Esophagus squamous epithelium (tissue), 5 donors: ENCODE measurements at regions of chr3 and their contacts with region 1.

Region 1: DNA sequence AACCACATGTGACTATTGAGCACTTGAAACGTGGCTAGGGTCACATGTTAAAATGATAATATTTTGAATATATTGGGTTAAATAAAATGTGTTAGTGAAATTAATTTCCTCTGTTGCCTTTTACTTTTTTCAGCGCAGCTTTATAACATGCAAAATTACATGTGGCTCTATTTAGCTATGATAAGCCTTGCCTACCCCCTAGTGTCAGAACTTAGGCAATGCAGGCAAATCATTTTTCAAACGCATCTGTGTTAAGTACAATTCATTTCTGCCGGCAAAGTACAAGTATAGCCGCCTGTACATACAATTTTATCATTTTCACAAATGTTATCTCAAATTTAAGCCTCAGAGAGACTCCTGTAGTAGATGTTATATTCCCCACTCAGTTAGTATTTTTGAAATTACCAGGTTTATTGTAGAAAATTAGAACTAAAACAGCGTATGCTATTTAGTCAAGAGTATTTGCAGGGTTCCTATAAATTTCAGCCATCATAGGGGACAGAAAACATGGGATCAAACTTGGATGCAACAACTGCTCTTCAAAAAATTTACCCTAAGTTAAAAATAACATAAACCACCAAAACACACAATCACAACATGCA is 56.1 kb downstream of the TAFA4 start:
- DNase-seq: no peak
- H3K4me3 ChIP-seq: no peak overlapping the region
- H3K27ac ChIP-seq: no peak overlapping the region
- H3K4me1 ChIP-seq: no peaks in the 10 kb centered on the region
- H3K27me3 ChIP-seq: peaks cover 0 to 5% (median 0%) of the 10 kb centered on the region in 4 donors
- CTCF ChIP-seq: peak; percentile 42 to 84 (median 74)
- POLR2A ChIP-seq: no peak

Region 2: GRCh38 chr3:66971891-66972551 is 1904.2 kb before region 1 on chr3:
- intact Hi-C with region 1: loop called (anchors 10 kb)
- DNase-seq: peak; percentile 20
- H3K4me3 ChIP-seq: peak overlapping the region in 3 of 4 donors; percentile 24 to 55 (median 35)
- H3K27ac ChIP-seq: peak overlapping the region in 1 of 4 donors; percentile 1
- H3K4me1 ChIP-seq: peaks cover 5 to 11% (median 5%) of the 10 kb centered on the region in 3 donors
- H3K27me3 ChIP-seq: no peaks in the 10 kb centered on the region
- CTCF ChIP-seq: peak in 5 of 6 experiments; percentile 58 to 77 (median 68)
- POLR2A ChIP-seq: no peak

Region 3: GRCh38 chr3:69144631-69145245 is 268.5 kb after region 1 on chr3:
- intact Hi-C with region 1: no loop called
- DNase-seq: no peak
- H3K4me3 ChIP-seq: no peak overlapping the region
- H3K27ac ChIP-seq: no peak overlapping the region
- H3K4me1 ChIP-seq: no peaks in the 10 kb centered on the region
- H3K27me3 ChIP-seq: no peaks in the 10 kb centered on the region
- CTCF ChIP-seq: no peak
- POLR2A ChIP-seq: no peak